AG04449 (cell line): ENCODE measurements at regions of chr11 and their contacts with region 1.

Region 1: DNA sequence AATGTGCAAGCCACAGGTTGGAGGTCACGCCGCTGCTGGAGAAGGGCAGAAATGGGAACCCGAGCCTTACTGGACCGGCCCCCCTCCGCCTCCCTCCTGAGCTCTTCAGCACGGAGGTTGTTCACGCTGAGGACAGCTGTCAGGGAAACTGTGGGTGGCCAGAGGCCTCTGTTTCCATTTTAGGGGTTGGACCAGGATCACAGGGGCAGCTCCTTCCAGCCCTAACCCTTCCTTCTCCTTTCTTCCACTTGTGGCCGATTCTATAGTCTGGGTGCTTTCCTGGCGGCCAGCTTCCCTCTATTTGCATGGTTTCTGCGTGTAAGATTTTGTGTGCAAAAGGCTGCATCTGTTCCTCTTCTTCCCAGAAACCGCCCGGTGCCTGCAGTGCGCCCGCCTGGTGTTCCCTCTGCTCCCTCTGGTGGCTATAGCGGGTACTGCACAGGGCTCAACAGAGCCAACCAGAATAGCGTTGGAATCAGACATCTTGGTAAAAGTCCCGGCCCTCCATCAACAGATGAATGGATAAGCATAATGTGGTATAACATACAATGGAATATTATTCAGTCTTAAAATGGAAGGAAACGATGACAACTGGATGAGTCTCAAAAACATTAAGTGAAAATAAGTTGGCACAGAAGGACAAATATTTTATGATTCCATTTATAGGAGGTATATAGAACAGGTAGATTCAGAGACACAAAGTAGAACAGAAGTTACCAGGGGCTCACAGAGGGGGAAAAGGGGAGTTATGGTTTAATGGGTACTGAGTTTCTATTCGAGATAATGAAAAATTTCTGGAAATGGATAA is 8.4 kb upstream of the SLC22A8 start:
- DNase-seq: peak; percentile 16
- H3K4me3 ChIP-seq: no peak overlapping the region
- CTCF ChIP-seq: peak; percentile 98

Region 2: GRCh38 chr11:62914416-62914815 is 109.6 kb before region 1 on chr11:
- CTCF ChIA-PET with region 1: interaction called, 669 read pairs
- POLR2A ChIA-PET with region 1: no interaction called
- DNase-seq: no peak
- H3K4me3 ChIP-seq: no peak overlapping the region
- CTCF ChIP-seq: no peak

Region 3: DNA sequence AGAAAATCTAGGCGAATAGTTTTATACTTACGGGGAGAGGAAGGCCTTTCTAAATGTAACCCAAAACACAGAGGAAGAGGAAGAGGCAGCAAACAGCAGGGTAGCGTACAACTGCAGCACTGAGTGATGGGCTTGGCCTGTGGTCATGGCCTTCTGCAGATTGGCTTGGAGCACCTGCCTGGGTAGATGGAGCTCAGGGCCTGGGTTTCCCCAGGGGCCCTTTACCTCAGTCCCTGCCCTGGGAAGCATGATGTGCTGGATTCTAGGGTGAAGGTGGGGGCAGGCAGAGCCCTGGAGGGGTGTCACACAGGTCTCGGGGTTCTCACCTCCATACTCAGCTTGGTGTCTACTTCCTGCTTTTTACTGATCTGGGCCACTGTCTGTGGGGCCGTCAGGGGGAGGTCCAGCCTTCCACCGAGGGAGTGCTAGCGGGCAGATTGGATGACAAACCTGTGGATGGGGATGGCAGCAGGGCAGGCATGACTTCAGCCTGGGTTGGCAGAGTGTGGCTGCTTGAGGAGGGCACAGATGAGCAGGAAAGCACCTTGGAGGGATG is 75.2 kb before region 1 on chr11:
- CTCF ChIA-PET with region 1: interaction called, 11 read pairs
- POLR2A ChIA-PET with region 1: no interaction called
- DNase-seq: no peak
- H3K4me3 ChIP-seq: no peak overlapping the region
- CTCF ChIP-seq: no peak

Region 4: DNA sequence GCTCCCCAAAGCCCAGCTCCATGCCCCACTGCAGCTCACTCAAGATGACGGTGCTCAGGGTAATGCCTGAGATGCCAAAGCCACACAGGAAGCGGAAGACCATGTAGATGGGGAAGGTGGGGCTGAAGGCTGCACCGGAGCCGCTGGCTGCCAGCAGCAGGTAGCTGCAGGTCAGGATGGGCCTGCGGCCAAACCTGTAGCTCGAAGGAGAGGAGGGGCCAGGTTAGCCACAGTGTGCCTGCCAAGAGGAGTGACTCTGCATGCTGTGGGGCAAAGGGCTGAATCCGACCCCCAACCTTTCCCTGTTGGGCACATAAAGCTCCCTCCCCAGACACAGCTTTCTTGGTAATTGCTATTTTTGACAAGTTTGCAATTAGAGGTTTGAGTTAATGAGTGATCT is 24.4 kb before region 1 on chr11:
- CTCF ChIA-PET with region 1: interaction called, 11 read pairs
- POLR2A ChIA-PET with region 1: no interaction called
- DNase-seq: no peak
- H3K4me3 ChIP-seq: no peak overlapping the region
- CTCF ChIP-seq: no peak

Region 5: DNA sequence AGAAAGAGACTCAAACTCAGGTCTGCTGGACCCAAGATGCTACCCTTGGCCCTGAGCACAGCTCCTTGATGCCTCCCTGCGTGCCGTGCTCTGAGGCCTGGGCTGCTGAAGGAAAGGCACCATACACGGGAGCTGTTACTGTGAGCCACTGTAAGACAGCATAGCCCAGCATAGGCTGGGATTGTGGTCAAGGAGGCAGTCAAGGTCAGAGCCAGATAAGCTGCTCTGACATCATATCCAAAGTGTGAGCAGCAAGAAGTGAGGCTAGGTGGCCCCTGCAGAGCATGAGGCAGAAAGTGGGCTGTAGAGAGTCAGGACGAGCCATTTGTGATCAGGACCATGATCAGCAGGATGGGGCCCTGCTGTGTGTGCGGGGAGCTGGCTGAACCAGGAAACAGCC is 16.1 kb before region 1 on chr11:
- CTCF ChIA-PET with region 1: interaction called, 32 read pairs
- POLR2A ChIA-PET with region 1: no interaction called
- DNase-seq: no peak
- H3K4me3 ChIP-seq: no peak overlapping the region
- CTCF ChIP-seq: no peak

Region 6: GRCh38 chr11:63262547-63262946 is 238.5 kb after region 1 on chr11:
- CTCF ChIA-PET with region 1: no interaction called
- POLR2A ChIA-PET with region 1: no interaction called
- DNase-seq: no peak
- H3K4me3 ChIP-seq: no peak overlapping the region
- CTCF ChIP-seq: no peak